B cell (primary cell): ENCODE measurements at regions of chr19 and their contacts with region 1.

Region 1: GRCh38 chr19:53195265-53195903 is 2.2 kb upstream of the ZNF665 start:
- DNase-seq: peak; percentile 85
- ATAC-seq: peak; percentile 42
- H3K4me3 ChIP-seq: no peak overlapping the region
- H3K4me3 Mint-ChIP-seq: peak overlapping the region; percentile 72
- H3K27ac ChIP-seq: no peak overlapping the region
- H3K27ac Mint-ChIP-seq: peak overlapping the region; percentile 70
- H3K4me1 ChIP-seq: peaks cover 17 to 28% of the 10 kb centered on the region in 2 donors
- H3K4me1 Mint-ChIP-seq: peaks cover 46% of the 10 kb centered on the region
- H3K27me3 ChIP-seq: no peaks in the 10 kb centered on the region
- H3K27me3 Mint-ChIP-seq: no peaks in the 10 kb centered on the region
- CTCF ChIP-seq: peak; percentile 94

Region 2: DNA sequence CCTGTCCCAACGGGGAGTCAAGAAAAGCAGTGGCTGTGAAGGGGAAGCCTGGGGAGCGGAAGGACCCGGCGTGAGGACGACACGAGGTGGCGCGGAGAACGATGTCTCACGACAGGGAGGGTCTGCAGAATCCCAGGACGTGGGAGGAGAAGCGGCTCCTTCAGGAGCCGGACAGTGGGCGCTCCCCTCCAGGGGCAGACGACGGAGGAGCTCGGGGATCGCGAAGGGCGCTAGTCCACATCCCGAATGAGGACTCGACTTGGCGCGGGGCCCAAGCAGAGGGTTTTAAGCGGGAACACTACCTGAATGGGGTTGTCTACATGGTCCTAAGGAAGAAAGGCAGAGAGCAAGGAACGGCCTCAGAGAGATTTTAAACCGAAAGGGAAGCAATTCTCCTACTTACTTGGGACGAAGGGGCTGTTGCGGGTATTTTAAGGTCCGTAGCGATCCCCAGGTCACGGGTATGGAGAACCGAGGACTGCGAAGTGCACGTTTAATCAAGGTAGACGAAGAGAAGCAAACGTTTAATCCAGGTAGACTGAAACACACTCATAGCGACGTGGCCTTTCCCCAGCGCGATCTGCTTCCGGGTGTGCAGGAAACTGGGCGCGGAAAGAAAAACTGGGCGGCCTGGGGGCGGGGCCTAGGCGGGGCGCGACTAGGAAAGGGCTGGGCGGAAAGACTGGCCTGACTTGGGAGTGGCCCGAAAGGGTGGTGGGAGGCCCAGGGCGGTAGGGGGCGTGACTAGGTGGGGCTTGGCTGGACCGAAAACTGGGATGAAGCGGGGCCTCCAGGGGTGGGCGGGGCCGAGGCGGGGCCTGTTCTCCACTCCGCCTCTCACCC is 1100.0 kb before region 1 on chr19 and contains the start of gene ZNF841:
- CTCF ChIA-PET with region 1: no interaction called
- POLR2A ChIA-PET with region 1: no interaction called
- intact Hi-C with region 1: loop called (anchors 10 kb)
- DNase-seq: peak; percentile 88
- ATAC-seq: peak; percentile 99
- H3K4me3 ChIP-seq: peak within 1 kb of the TSS; percentile 89 to 100 (median 99)
- H3K4me3 Mint-ChIP-seq: peak within 1 kb of the TSS; percentile 93
- H3K27ac ChIP-seq: peak within 1 kb of the TSS; percentile 62 to 87
- H3K27ac Mint-ChIP-seq: peak within 1 kb of the TSS; percentile 85
- H3K4me1 ChIP-seq: peaks cover 14 to 20% of the 10 kb centered on the region in 2 donors
- H3K4me1 Mint-ChIP-seq: peaks cover 33% of the 10 kb centered on the region
- H3K27me3 ChIP-seq: no peaks in the 10 kb centered on the region
- H3K27me3 Mint-ChIP-seq: no peaks in the 10 kb centered on the region
- CTCF ChIP-seq: no peak
- total RNA-seq, gene ZNF841: 50.8 and 54.5 TPM in 2 replicates

Region 3: DNA sequence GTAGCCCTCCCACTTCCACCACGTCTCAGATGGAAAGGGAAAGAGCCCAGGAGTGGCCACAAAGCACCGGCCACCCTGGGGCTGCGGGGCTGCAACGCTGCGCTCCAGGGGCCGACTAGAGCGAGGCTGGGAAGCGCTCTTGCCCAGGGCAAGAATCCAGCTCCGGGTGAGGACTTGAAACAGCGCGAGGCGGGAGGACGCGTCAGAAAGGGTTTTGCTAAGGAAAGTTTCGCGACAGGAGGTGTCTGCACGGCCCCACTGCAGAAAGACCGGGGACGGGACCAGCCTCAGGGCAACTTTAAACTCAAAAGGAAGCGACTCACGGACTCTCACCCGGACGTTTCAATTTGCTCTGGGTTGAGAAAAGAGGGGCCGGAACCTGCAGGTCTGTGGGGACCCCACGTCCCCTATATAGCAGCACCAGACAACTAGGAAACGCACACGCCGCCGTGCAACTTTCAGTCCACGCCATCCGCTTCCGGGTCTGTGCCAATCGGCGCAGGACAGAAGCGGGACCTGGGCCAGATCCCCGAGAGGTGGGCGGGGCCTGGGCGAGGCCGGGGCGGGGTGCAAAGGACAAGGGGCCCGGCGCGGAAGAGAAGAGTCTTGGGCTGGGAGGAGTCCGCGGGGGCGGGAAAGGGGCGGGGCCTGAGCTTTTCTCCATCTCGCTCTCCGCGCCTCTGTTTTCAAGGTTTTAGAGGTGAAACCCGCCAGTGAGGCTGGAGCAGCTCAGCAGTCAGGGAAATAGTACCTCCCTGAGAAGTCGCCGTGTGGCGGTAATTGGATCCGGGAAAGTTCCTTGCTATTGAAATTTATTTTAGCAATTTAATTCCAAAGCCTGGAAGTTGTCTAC is 232.8 kb before region 1 on chr19 and contains the start of gene ZNF816:
- CTCF ChIA-PET with region 1: no interaction called
- POLR2A ChIA-PET with region 1: no interaction called
- intact Hi-C with region 1: loop called (anchors 5 kb)
- DNase-seq: peak; percentile 96
- ATAC-seq: peak; percentile 100
- H3K4me3 ChIP-seq: peak within 1 kb of the TSS; percentile 72 to 92 (median 80)
- H3K4me3 Mint-ChIP-seq: peak within 1 kb of the TSS; percentile 92
- H3K27ac ChIP-seq: peak within 1 kb of the TSS; percentile 50 to 69
- H3K27ac Mint-ChIP-seq: peak within 1 kb of the TSS; percentile 92
- H3K4me1 ChIP-seq: peaks cover 14 to 19% of the 10 kb centered on the region in 2 donors
- H3K4me1 Mint-ChIP-seq: peaks cover 32% of the 10 kb centered on the region
- H3K27me3 ChIP-seq: no peaks in the 10 kb centered on the region
- H3K27me3 Mint-ChIP-seq: no peaks in the 10 kb centered on the region
- CTCF ChIP-seq: no peak
- total RNA-seq, gene ZNF816: 22.3 and 25.0 TPM in 2 replicates

Region 4: GRCh38 chr19:53037101-53038097 is 158.0 kb before region 1 on chr19:
- CTCF ChIA-PET with region 1: no interaction called
- POLR2A ChIA-PET with region 1: no interaction called
- intact Hi-C with region 1: no loop called
- DNase-seq: peak; percentile 8
- ATAC-seq: no peak
- H3K4me3 ChIP-seq: peak overlapping the region in 4 of 5 experiments; percentile 31 to 49 (median 41)
- H3K4me3 Mint-ChIP-seq: peak overlapping the region; percentile 24
- H3K27ac ChIP-seq: no peak overlapping the region
- H3K27ac Mint-ChIP-seq: no peak overlapping the region
- H3K4me1 ChIP-seq: peaks cover 0 to 3% of the 10 kb centered on the region in 2 donors
- H3K4me1 Mint-ChIP-seq: no peaks in the 10 kb centered on the region
- H3K27me3 ChIP-seq: peaks cover 0 to 12% (median 0%) of the 10 kb centered on the region in 4 experiments
- H3K27me3 Mint-ChIP-seq: peaks cover 10% of the 10 kb centered on the region
- CTCF ChIP-seq: no peak

Region 5: DNA sequence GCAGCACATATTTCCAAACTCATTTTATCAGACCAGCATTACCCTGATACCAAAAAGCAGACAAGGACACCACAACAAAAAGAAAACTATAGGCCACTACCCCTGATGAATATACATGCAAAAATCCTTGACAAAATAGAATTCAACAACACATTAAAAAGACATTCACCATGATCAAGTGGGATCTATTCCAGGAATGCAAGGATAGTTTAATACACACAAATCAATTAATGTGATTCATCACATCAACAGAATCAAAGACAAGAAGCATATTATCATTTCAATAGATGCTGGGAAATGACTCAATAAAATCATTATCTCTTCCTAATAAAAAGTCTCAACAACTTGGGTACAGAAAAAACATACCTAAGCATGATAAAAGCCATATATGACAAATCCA is 47.7 kb before region 1 on chr19:
- CTCF ChIA-PET with region 1: no interaction called
- POLR2A ChIA-PET with region 1: no interaction called
- intact Hi-C with region 1: no loop called
- DNase-seq: no peak
- ATAC-seq: no peak
- H3K4me3 ChIP-seq: no peak overlapping the region
- H3K4me3 Mint-ChIP-seq: no peak overlapping the region
- H3K27ac ChIP-seq: no peak overlapping the region
- H3K27ac Mint-ChIP-seq: no peak overlapping the region
- H3K4me1 ChIP-seq: no peaks in the 10 kb centered on the region
- H3K4me1 Mint-ChIP-seq: no peaks in the 10 kb centered on the region
- H3K27me3 ChIP-seq: no peaks in the 10 kb centered on the region
- H3K27me3 Mint-ChIP-seq: no peaks in the 10 kb centered on the region
- CTCF ChIP-seq: no peak

Region 6: GRCh38 chr19:53333463-53334449 is 138.4 kb after region 1 on chr19 and contains the start of gene ZNF845:
- CTCF ChIA-PET with region 1: interaction called, 3 read pairs
- POLR2A ChIA-PET with region 1: no interaction called
- intact Hi-C with region 1: loop called (anchors 1 kb)
- DNase-seq: peak; percentile 95
- ATAC-seq: peak; percentile 100
- H3K4me3 ChIP-seq: peak within 1 kb of the TSS; percentile 94 to 99 (median 96)
- H3K4me3 Mint-ChIP-seq: peak within 1 kb of the TSS; percentile 96
- H3K27ac ChIP-seq: peak within 1 kb of the TSS; percentile 60 to 81
- H3K27ac Mint-ChIP-seq: peak within 1 kb of the TSS; percentile 95
- H3K4me1 ChIP-seq: peaks cover 10 to 21% of the 10 kb centered on the region in 2 donors
- H3K4me1 Mint-ChIP-seq: peaks cover 22% of the 10 kb centered on the region
- H3K27me3 ChIP-seq: peaks cover 0 to 3% (median 0%) of the 10 kb centered on the region in 4 experiments
- H3K27me3 Mint-ChIP-seq: peaks cover 11% of the 10 kb centered on the region
- CTCF ChIP-seq: no peak
- total RNA-seq, gene ZNF845: 16.9 and 17.4 TPM in 2 replicates

Region 7: GRCh38 chr19:53424968-53425597 is 229.7 kb after region 1 on chr19:
- CTCF ChIA-PET with region 1: interaction called, 14 read pairs
- POLR2A ChIA-PET with region 1: no interaction called
- intact Hi-C with region 1: no loop called
- DNase-seq: peak; percentile 78
- ATAC-seq: peak; percentile 93
- H3K4me3 ChIP-seq: no peak overlapping the region
- H3K4me3 Mint-ChIP-seq: no peak overlapping the region
- H3K27ac ChIP-seq: no peak overlapping the region
- H3K27ac Mint-ChIP-seq: no peak overlapping the region
- H3K4me1 ChIP-seq: no peaks in the 10 kb centered on the region
- H3K4me1 Mint-ChIP-seq: peaks cover 3% of the 10 kb centered on the region
- H3K27me3 ChIP-seq: no peaks in the 10 kb centered on the region
- H3K27me3 Mint-ChIP-seq: no peaks in the 10 kb centered on the region
- CTCF ChIP-seq: peak; percentile 86

Region 8: GRCh38 chr19:53867225-53868090 is 672.1 kb after region 1 on chr19 and contains the start of gene MYADM:
- CTCF ChIA-PET with region 1: no interaction called
- POLR2A ChIA-PET with region 1: no interaction called
- intact Hi-C with region 1: loop called (anchors 5 kb)
- DNase-seq: peak; percentile 100
- ATAC-seq: peak; percentile 77
- H3K4me3 ChIP-seq: peak within 1 kb of the TSS; percentile 82 to 100 (median 90)
- H3K4me3 Mint-ChIP-seq: peak within 1 kb of the TSS; percentile 92
- H3K27ac ChIP-seq: peak within 1 kb of the TSS; percentile 98 to 99
- H3K27ac Mint-ChIP-seq: peak within 1 kb of the TSS; percentile 99
- H3K4me1 ChIP-seq: peaks cover 33 to 59% of the 10 kb centered on the region in 2 donors
- H3K4me1 Mint-ChIP-seq: peaks cover 38% of the 10 kb centered on the region
- H3K27me3 ChIP-seq: no peaks in the 10 kb centered on the region
- H3K27me3 Mint-ChIP-seq: no peaks in the 10 kb centered on the region
- CTCF ChIP-seq: no peak
- total RNA-seq, gene MYADM: 18.5 and 18.9 TPM in 2 replicates